Panc1 (cell line): ENCODE measurements at regions of chr18 and their contacts with region 1.

Region 1: GRCh38 chr18:77101410-77102258 is 30.9 kb downstream of the MBP start:
- DNase-seq: peak; percentile 99
- ATAC-seq: peak; percentile 91
- H3K4me3 ChIP-seq: peak overlapping the region; percentile 2 to 6; a peak in 2 of 4 replicates
- H3K27ac ChIP-seq: peak overlapping the region; percentile 95
- H3K4me1 ChIP-seq: peaks cover 91% of the 10 kb centered on the region
- H3K27me3 ChIP-seq: no peaks in the 10 kb centered on the region
- CTCF ChIP-seq: no peak

Region 2: DNA sequence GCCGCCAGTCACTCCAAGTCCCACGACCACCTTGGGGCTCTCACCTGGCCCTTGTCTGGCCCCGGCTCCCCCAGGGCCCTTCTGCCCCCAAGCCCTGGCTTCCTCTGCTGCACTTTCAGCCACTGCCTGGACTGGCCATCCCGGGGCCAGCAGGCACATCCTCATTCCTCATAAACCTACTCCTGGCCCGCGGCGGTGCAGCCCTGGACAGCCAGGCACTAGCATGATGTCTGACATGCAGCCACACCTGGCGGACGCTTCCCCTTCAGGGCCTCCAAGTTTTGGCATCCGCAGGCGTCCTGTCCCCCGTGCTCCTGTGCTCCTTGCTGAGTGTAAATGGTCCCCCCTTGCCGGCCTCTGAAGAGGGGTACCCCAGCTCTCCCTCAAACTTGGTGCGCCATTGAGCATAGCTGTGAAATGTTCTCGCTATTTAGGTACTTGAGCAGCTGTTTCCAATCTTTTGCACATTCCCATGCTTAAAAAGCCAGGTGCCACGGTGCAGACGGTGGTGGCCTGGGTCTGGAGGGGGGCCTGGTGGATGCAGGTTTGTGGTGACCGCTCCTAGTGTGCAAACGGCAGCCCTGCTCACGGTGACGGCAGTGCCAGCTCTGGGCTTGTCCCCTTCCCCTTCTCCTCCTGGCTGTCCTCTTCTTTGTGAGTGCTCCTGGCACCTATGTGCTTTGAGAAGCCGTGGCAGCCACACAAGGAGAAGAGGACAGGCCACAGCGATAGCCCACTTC is 92.9 kb before region 1 on chr18:
- CTCF ChIA-PET with region 1: no interaction called
- POLR2A ChIA-PET with region 1: interaction called, 11 read pairs
- in situ Hi-C with region 1: no loop called
- intact Hi-C with region 1: no loop called
- DNase-seq: no peak
- ATAC-seq: no peak
- H3K4me3 ChIP-seq: no peak overlapping the region
- H3K27ac ChIP-seq: no peak overlapping the region
- H3K4me1 ChIP-seq: no peaks in the 10 kb centered on the region; the same call in 1 of the 2 replicates
- H3K27me3 ChIP-seq: no peaks in the 10 kb centered on the region
- CTCF ChIP-seq: no peak

Region 3: DNA sequence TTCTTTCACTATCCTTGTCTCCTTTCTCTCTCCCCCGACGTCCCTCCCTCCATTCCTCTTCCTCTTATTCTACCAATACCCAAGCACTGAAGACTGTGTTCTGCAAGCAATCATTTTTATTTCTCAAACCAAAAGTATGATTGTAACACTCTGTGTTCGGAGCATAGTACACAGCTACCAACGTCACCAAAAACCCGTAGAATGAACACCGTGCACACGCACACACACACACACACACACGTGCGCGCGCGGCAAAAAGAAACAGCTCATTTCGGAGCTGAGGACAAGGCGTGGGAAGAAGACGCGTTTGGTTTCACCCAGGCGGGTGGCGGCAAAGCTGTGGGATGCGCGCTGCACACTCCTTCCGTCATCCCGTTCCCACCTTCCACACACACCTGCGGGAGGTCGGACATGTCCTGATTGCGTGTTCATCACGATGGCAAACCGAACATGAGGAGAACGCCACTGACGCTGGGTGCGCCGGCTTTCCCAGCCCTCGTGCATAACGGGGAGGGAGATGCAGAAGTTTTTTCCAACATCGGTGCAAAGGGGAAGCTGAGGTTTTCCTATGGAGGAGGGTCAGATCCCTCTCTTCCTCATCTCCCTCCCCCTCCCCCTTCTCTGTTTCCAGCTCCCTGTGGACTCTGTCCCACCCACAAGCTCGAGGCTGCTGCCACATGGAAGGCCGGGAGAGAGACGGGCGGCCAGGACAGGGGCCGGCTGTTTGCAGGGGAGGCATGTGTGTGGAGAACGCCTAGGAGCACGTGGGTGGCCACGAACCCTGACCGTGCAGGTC is 10.5 kb after region 1 on chr18:
- CTCF ChIA-PET with region 1: no interaction called
- POLR2A ChIA-PET with region 1: no interaction called
- in situ Hi-C with region 1: no loop called
- intact Hi-C with region 1: no loop called
- DNase-seq: no peak
- ATAC-seq: no peak
- H3K4me3 ChIP-seq: no peak overlapping the region
- H3K27ac ChIP-seq: peak overlapping the region; percentile 94
- H3K4me1 ChIP-seq: peaks cover 98% of the 10 kb centered on the region
- H3K27me3 ChIP-seq: no peaks in the 10 kb centered on the region
- CTCF ChIP-seq: no peak

Region 4: GRCh38 chr18:77124452-77124922 is 22.9 kb after region 1 on chr18:
- CTCF ChIA-PET with region 1: interaction called, 10 read pairs
- POLR2A ChIA-PET with region 1: no interaction called
- in situ Hi-C with region 1: no loop called
- intact Hi-C with region 1: no loop called
- DNase-seq: no peak
- ATAC-seq: peak; percentile 65
- H3K4me3 ChIP-seq: peak overlapping the region; percentile 22 to 40
- H3K27ac ChIP-seq: peak overlapping the region; percentile 97
- H3K4me1 ChIP-seq: peaks cover 99% of the 10 kb centered on the region
- H3K27me3 ChIP-seq: no peaks in the 10 kb centered on the region
- CTCF ChIP-seq: no peak

Region 5: GRCh38 chr18:77132371-77133050 is 30.9 kb after region 1 on chr18 and contains the start of gene MBP:
- CTCF ChIA-PET with region 1: no interaction called
- POLR2A ChIA-PET with region 1: interaction called, 15 read pairs
- in situ Hi-C with region 1: no loop called
- intact Hi-C with region 1: no loop called
- DNase-seq: no peak
- ATAC-seq: peak; percentile 73
- H3K4me3 ChIP-seq: peak within 1 kb of the TSS; percentile 77 to 86
- H3K27ac ChIP-seq: peak within 1 kb of the TSS; percentile 97
- H3K4me1 ChIP-seq: peaks cover 44% of the 10 kb centered on the region
- H3K27me3 ChIP-seq: no peaks in the 10 kb centered on the region
- CTCF ChIP-seq: no peak
- total RNA-seq, gene MBP: 88.8 TPM

Region 6: GRCh38 chr18:77320971-77321559 is 219.4 kb after region 1 on chr18:
- CTCF ChIA-PET with region 1: no interaction called
- POLR2A ChIA-PET with region 1: no interaction called
- in situ Hi-C with region 1: no loop called
- intact Hi-C with region 1: no loop called
- DNase-seq: no peak
- ATAC-seq: no peak
- H3K4me3 ChIP-seq: no peak overlapping the region
- H3K27ac ChIP-seq: no peak overlapping the region
- H3K4me1 ChIP-seq: no peaks in the 10 kb centered on the region
- H3K27me3 ChIP-seq: peaks cover 8% of the 10 kb centered on the region
- CTCF ChIP-seq: no peak